ENCODE measurements at regions of chr17 and their contacts with region 1.

Region 1: DNA sequence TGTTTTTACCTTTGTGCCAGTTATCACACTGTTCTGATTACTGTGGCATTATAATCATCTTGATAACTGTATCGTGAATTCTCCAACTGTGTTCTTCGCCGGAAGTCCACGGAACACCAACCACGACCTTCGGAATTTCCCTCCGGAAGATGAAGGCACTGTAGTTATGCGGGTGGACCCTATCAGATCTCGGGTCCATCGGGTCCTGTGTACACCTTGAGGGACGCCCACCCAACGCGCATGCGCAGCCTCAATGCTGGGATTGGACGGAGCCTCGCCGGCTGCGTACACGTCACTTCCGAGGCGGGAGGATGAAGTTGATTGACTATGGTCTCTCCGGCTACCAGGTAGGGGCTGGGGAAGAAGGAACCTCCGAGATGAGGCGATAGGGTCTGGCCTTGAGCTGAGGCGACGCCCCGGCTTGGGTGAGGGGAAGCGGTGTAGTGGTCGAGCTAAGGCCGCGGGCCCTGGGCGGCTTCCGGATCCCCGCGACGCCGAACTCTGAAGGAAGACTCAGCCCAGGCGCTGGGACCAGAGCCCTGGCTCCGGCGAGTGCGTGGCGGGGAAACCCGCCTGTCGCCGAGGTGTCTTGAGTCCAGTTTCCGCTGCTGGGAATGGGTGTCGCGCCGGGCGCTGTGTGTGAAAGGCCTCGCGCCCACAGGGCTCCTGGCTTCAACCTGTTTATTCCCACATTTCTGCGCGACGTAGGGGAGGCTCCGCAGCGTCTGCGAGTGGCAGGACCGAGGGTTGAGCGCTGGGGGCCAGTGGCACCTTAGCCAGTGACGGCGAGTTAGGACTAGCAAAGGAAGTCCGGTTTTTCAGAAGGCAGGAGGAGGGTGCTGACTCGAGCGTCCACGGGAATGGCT is at the start of gene DHRS7B:
- DNase-seq: peak; percentile 98
- ATAC-seq: peak; percentile 94
- H3K4me3 Mint-ChIP-seq: peak within 1 kb of the TSS; percentile 96
- H3K27ac Mint-ChIP-seq: peak within 1 kb of the TSS; percentile 98
- H3K4me1 Mint-ChIP-seq: peaks cover 27% of the 10 kb centered on the region
- H3K27me3 Mint-ChIP-seq: no peaks in the 10 kb centered on the region
- CTCF ChIP-seq: no peak
- total RNA-seq, gene DHRS7B: 13.5 to 15.3 TPM

Region 2: DNA sequence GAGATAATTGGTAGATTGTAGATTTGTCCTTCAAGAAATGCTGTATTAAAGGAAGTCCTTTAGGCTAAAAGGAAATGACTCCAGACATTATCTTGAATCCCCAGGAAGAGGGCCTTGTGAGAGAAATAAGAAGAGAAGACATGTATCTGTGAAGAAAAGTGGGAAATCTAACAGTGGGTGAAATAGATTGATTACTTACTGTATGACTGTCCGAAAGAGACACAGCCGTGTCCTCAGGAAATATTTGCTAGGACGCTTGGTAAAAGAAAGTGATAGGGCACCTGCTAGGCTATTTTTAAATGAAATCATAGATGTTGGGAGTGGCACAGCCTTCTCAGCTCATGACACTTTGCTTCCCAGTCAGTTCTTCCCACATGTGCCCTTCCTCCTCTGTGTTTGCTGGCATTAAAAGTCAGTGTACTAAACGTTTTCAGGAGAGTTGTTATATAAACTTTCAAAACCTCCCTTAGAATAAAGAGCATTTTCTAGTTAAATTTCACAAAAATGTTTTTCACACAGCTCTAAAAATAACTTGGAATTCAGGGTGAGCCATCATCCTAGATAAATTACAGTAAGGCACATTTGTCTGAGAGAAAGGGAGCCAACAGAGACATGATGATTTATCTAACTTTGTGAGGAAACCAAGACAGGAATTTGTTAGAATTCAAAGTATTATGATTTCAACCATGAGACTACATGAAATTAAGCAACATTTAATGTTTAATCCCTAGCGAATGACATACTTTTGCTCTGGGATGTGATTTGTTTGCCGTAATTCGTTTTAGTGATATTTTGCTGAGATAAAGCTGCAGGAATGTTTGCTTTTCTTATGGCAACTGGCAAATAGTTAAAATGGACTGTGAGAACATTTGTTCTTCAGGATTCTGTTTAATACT is 34.9 kb after region 1 on chr17:
- CTCF ChIA-PET with region 1: no interaction called
- POLR2A ChIA-PET with region 1: no interaction called
- intact Hi-C with region 1: no loop called
- DNase-seq: no peak
- ATAC-seq: no peak
- H3K4me3 Mint-ChIP-seq: no peak overlapping the region
- H3K27ac Mint-ChIP-seq: no peak overlapping the region
- H3K4me1 Mint-ChIP-seq: peaks cover 18% of the 10 kb centered on the region
- H3K27me3 Mint-ChIP-seq: no peaks in the 10 kb centered on the region
- CTCF ChIP-seq: no peak

Region 3: DNA sequence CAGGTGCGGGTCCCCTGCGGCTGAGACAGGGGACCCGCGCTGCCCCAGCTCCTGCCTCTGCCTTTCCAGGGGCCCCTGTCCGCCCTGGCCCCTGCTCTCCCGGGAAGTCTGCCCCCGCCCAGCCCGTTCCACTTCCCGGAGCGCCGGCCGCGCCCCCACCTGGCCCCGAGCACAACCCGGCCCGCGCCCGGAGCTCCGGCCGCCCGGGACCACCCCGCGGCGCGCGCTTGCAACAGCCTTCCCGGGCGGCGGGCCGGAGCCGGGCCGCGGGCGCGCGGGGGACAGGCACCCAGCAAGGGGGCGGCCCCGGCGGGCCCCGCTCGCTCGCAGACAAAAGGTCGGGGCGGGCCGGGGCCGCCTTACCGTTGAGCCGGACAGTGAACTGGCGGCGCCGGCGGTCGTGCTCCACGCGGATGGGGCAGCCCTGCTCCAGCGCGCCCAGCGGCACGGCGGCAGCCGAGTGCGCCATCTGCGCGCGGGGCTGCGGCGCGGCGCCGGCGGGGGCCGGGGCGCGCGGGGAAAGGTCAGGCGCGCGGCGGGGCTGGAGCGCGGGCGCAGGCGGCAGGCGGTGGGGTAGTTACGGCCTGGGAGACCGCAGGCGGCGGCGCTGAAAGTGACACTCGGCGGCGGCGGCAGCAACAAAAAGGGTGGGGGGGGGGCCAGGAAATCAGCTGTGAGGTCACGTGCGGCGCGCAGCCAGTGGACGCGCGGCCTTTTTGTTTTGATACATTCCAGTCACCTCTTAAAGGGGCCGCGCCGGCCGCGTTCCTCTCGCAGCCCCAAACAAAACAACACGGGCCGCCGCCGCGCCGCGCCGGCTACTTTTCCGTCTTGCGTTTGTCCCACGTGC is 126.1 kb after region 1 on chr17 and contains the start of gene NATD1:
- CTCF ChIA-PET with region 1: interaction called, 4 read pairs
- POLR2A ChIA-PET with region 1: no interaction called
- intact Hi-C with region 1: loop called (anchors 10 kb)
- DNase-seq: peak; percentile 84
- ATAC-seq: peak; percentile 76
- H3K4me3 Mint-ChIP-seq: peak within 1 kb of the TSS; percentile 77
- H3K27ac Mint-ChIP-seq: peak within 1 kb of the TSS; percentile 27
- H3K4me1 Mint-ChIP-seq: peaks cover 8% of the 10 kb centered on the region
- H3K27me3 Mint-ChIP-seq: no peaks in the 10 kb centered on the region
- CTCF ChIP-seq: no peak
- total RNA-seq, gene NATD1: 1.1 to 1.3 TPM

Region 4: DNA sequence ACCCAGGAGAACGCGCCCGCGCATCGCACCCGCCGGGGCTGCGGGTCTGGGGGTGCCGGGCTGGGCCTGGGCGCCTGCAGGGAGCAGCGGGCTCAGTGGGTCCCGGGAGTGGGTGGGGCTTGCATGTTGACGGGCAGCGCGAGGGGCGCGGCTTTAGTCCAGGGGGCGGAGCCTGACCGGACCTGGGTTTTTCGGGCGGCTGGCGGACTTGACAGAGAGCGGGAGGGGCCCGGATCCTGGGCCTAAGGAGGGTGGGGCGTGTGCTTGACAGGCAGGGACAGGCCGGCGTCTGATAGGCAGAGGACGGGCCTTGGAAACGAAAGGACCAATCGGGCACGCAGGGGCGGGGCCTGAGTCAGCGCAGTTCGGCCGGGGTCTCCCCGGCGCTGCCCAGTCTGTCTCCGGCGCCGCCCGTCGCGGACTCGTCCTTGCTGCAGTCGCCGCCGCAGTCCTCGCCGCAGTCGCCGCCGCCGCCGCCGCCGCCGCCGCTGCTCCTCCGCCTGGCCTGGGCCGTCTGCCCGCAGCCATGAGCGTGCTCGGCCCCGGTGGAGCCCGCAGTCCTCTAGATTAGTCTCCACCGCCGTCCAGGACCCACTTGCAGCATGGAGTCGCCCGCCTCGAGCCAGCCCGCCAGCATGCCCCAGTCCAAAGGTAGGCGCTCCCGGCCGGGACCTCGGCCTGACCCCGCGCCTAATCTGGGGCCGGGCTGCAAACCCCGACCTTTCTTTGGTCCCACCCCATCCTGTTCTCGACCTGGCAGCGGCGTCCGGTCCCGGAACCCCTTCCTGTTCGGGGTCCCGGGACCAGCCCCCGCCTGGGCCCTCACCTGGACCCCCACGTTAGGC is 157.7 kb after region 1 on chr17 and contains the start of gene MAP2K3:
- CTCF ChIA-PET with region 1: interaction called, 4 read pairs
- POLR2A ChIA-PET with region 1: no interaction called
- intact Hi-C with region 1: loop called (anchors 10 kb)
- DNase-seq: peak; percentile 99
- ATAC-seq: peak; percentile 78
- H3K4me3 Mint-ChIP-seq: peak within 1 kb of the TSS; percentile 99
- H3K27ac Mint-ChIP-seq: peak within 1 kb of the TSS; percentile 95
- H3K4me1 Mint-ChIP-seq: peaks cover 48% of the 10 kb centered on the region
- H3K27me3 Mint-ChIP-seq: no peaks in the 10 kb centered on the region
- CTCF ChIP-seq: no peak
- total RNA-seq, gene MAP2K3: 151 to 153 TPM